Posterior vena cava (tissue), 2 donors: ENCODE measurements at regions of chr4 and their contacts with region 1.

Region 1: GRCh38 chr4:133263082-133263481 is 114.0 kb downstream of the PCDH10 start:
- DNase-seq: no peak

Region 2: GRCh38 chr4:132709056-132709455 is 554.0 kb before region 1 on chr4:
- intact Hi-C with region 1: no loop called
- DNase-seq: no peak

Region 3: GRCh38 chr4:132871631-132872030 is 391.5 kb before region 1 on chr4:
- intact Hi-C with region 1: no loop called
- DNase-seq: no peak

Region 4: GRCh38 chr4:133102612-133103409 is 160.3 kb before region 1 on chr4:
- intact Hi-C with region 1: loop called in 1 of 2 experiments (anchors 5 kb)
- DNase-seq: no peak